ENCODE measurements at regions of chr13 and their contacts with region 1.

Region 1: GRCh38 chr13:49792550-49793324 is at the start of gene KPNA3:
- DNase-seq: peak; percentile 89 to 93 (median 90)
- H3K4me3 ChIP-seq: peak within 1 kb of the TSS; percentile 71 to 86 (median 73)
- H3K4me3 Mint-ChIP-seq: peak within 1 kb of the TSS; percentile 96 to 97
- H3K27ac ChIP-seq: peak within 1 kb of the TSS; percentile 93
- H3K27ac Mint-ChIP-seq: peak within 1 kb of the TSS; percentile 94 to 99 (median 98)
- H3K4me1 ChIP-seq: peaks cover 21 to 36% of the 10 kb centered on the region in 2 donors
- H3K4me1 Mint-ChIP-seq: peaks cover 34% of the 10 kb centered on the region
- H3K27me3 ChIP-seq: no peaks in the 10 kb centered on the region
- H3K27me3 Mint-ChIP-seq: peaks cover 1 to 12% (median 3%) of the 10 kb centered on the region in 3 donors
- CTCF ChIP-seq: no peak
- polyA plus RNA-seq, gene KPNA3: 11.5 to 15.3 (median 12.8) TPM

Region 2: DNA sequence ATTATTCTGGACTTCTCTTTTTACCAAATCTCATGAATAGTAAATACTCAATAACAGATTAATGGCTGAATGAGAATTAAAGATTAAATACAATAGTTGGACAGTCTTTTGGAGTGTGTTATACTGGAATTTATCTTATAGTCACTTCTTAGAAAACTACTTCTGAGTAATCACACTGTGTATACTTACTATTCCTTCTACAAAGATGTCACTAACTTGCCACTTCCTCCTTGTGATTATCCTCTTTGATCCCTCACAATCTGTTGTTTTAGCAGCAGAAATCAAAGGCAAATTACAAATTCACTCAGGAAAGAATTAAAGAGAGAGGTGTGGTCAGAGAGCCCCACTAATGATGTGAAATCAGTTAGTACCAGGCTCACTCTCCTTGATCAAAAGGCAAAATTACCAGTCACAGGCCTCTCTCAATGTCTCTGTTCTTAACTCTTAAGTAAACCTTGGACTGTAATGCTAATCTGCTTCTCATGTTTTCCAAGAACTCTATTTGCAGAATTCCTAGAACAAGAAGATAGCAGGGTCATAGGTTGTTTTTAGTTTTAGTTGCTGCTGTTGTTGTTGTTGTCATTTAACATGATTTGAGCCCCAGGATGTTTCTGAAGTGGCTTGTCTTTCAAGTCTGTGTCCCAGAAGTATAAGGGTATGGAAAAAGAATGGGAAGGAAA is 854.3 kb before region 1 on chr13:
- intact Hi-C with region 1: no loop called
- DNase-seq: no peak
- H3K4me3 ChIP-seq: no peak overlapping the region
- H3K4me3 Mint-ChIP-seq: no peak overlapping the region
- H3K27ac ChIP-seq: no peak overlapping the region
- H3K27ac Mint-ChIP-seq: no peak overlapping the region
- H3K4me1 ChIP-seq: no peaks in the 10 kb centered on the region
- H3K4me1 Mint-ChIP-seq: no peaks in the 10 kb centered on the region
- H3K27me3 ChIP-seq: no peaks in the 10 kb centered on the region
- H3K27me3 Mint-ChIP-seq: no peaks in the 10 kb centered on the region
- CTCF ChIP-seq: no peak

Region 3: DNA sequence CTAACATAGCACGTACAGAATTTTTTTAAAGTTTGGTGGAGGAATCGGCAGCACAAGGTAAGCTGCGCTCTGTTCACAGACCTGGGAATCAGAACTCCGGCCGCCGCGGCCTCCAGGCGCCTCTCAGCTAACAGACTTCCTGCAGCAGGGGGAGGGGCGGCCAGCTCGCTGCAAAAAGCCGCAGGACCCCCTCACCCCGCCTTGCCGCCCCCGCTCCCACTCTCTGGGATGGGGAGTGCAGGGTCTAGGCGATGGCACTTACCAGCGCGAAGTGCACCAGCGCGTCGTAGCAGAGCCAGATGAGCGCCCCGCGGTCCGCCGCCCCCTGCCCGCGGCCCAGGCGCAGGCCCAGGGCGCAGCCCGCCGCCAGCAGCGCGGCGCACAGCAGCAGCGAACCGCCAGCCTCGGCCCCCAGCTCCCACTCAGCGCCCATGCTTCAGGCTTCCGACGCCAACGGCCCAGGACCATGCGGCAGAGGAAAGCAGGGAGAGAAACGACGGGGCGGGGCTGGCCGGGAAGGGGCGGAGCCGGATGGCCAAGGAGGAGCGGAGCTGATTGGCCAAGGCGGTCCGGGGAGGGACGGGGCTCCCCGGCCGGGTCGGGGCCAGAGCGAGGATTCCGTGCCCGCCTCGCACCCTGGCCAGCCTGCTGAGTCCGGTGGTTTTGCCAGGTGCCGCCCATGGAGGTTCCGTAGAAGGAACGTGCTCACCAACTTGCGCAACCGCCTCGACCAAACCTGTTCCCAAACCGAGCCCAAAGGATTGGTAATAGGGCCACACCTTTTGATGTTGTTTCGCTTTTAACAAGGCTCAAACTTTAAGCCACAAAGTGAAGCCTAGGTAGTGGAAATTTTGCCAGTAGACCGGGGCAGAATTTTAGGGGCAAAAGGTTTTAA is 101.5 kb before region 1 on chr13 and contains the start of gene EBPL:
- intact Hi-C with region 1: loop called (anchors 5 to 10 kb)
- DNase-seq: peak; percentile 70 to 80 (median 71)
- H3K4me3 ChIP-seq: peak within 1 kb of the TSS; percentile 58 to 81 (median 77)
- H3K4me3 Mint-ChIP-seq: peak within 1 kb of the TSS; percentile 86 to 96
- H3K27ac ChIP-seq: peak within 1 kb of the TSS; percentile 3 to 63
- H3K27ac Mint-ChIP-seq: peak within 1 kb of the TSS in 6 of 7 donors; percentile 23 to 81 (median 38)
- H3K4me1 ChIP-seq: peaks cover 30 to 37% of the 10 kb centered on the region in 2 donors
- H3K4me1 Mint-ChIP-seq: peaks cover 36% of the 10 kb centered on the region
- H3K27me3 ChIP-seq: no peaks in the 10 kb centered on the region
- H3K27me3 Mint-ChIP-seq: peaks cover 0 to 6% (median 5%) of the 10 kb centered on the region in 3 donors
- CTCF ChIP-seq: no peak
- polyA plus RNA-seq, gene EBPL: 10.2 to 29.4 (median 27.3) TPM

Region 4: DNA sequence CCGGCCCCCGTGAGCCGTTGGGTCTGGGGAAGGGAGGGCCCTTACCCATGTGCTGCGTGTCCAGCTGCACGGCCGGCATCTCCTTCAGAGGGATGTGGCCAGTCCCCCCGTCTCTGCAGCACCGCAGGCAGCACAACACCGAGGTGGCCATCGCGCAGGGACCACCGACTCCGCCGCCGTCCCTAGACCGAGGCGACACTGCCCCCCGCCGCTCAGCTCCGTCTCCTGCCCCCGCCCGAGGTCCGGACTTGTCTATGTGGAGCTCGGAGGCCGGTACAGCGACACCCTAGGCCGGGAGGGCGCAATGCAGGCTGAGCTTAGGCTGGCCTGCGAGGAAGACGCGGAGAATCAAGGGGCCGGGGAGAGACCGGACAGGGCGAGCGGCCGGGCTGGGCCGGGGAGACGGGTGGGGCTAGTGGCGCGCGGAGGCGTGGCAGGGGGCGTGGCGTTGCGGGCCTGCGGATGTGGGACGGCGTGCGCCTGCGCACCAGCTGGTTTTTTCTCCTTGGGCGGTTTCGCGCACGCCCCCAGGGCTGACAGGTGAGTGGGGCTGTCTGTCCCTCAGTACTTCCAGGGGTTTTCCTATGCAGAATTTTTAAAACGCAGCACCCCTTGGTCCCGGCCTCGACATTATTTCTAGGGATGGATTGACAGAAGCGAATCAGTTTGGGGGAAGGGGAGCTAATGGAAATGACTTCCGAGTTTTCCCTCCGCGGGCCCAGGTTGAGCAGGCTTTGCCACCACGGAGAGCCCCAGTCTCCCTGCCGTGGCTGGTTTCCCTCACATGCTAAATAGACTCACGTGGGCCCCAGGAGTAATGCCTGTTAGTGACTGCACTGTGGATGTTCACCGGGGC is 143.6 kb after region 1 on chr13 and contains the start of gene SPRYD7:
- intact Hi-C with region 1: loop called in 1 of 2 experiments (anchors 10 kb)
- DNase-seq: peak; percentile 95 to 97 (median 97)
- H3K4me3 ChIP-seq: peak within 1 kb of the TSS; percentile 70 to 86 (median 74)
- H3K4me3 Mint-ChIP-seq: peak within 1 kb of the TSS; percentile 96 to 98
- H3K27ac ChIP-seq: peak within 1 kb of the TSS; percentile 49 to 67
- H3K27ac Mint-ChIP-seq: peak within 1 kb of the TSS; percentile 76 to 95 (median 89)
- H3K4me1 ChIP-seq: peaks cover 12 to 22% of the 10 kb centered on the region in 2 donors
- H3K4me1 Mint-ChIP-seq: peaks cover 28% of the 10 kb centered on the region
- H3K27me3 ChIP-seq: no peaks in the 10 kb centered on the region
- H3K27me3 Mint-ChIP-seq: peaks cover 1 to 3% (median 3%) of the 10 kb centered on the region in 3 donors
- CTCF ChIP-seq: peak; percentile 95
- polyA plus RNA-seq, gene SPRYD7: 1.1 to 2.3 (median 1.2) TPM

Region 5: DNA sequence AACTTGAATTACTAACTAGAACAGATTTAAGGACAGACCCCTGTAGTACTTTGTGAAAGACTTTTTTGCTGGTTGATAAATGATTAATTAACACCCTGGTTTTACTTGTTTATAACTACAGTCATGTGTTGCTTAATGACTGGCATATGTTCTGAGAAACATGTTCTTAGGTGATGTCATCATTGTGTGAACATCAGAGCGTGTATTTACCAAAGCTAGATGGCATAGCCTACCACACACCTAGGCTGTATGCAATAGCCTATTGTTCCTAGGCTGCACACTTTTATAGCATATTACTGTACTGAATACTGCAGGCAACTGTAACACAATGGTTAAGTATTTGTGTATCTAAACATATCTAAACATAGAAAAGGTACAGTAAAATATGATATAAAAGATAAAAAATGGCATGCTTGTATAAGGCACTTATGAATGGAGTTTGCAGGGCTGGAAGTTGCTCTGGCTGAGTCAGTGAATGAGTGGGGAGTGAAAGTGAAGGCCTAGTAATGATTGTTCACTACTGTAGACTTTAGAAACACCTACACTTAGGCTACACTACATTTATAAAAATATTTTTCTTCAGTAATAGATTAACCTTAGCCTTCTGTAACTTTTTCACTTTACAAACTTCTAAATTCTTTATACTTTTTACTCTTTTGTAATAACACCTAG is 482.8 kb after region 1 on chr13:
- intact Hi-C with region 1: no loop called
- DNase-seq: no peak
- H3K4me3 ChIP-seq: no peak overlapping the region
- H3K4me3 Mint-ChIP-seq: no peak overlapping the region
- H3K27ac ChIP-seq: no peak overlapping the region
- H3K27ac Mint-ChIP-seq: no peak overlapping the region
- H3K4me1 ChIP-seq: no peaks in the 10 kb centered on the region
- H3K4me1 Mint-ChIP-seq: peaks cover 17% of the 10 kb centered on the region
- H3K27me3 ChIP-seq: no peaks in the 10 kb centered on the region
- H3K27me3 Mint-ChIP-seq: peaks cover 0 to 1% (median 0%) of the 10 kb centered on the region in 3 donors
- CTCF ChIP-seq: no peak